ENCODE measurements at regions of chr17 and their contacts with region 1.

Region 1: GRCh38 chr17:47889734-47890529 is 6.1 kb upstream of the SP2 start:
- DNase-seq: peak; percentile 81
- CTCF ChIP-seq: peak; percentile 95

Region 2: GRCh38 chr17:47663912-47664625 is 225.9 kb before region 1 on chr17:
- CTCF ChIA-PET with region 1: no interaction called
- POLR2A ChIA-PET with region 1: no interaction called
- DNase-seq: peak; percentile 61
- CTCF ChIP-seq: peak; percentile 80

Region 3: DNA sequence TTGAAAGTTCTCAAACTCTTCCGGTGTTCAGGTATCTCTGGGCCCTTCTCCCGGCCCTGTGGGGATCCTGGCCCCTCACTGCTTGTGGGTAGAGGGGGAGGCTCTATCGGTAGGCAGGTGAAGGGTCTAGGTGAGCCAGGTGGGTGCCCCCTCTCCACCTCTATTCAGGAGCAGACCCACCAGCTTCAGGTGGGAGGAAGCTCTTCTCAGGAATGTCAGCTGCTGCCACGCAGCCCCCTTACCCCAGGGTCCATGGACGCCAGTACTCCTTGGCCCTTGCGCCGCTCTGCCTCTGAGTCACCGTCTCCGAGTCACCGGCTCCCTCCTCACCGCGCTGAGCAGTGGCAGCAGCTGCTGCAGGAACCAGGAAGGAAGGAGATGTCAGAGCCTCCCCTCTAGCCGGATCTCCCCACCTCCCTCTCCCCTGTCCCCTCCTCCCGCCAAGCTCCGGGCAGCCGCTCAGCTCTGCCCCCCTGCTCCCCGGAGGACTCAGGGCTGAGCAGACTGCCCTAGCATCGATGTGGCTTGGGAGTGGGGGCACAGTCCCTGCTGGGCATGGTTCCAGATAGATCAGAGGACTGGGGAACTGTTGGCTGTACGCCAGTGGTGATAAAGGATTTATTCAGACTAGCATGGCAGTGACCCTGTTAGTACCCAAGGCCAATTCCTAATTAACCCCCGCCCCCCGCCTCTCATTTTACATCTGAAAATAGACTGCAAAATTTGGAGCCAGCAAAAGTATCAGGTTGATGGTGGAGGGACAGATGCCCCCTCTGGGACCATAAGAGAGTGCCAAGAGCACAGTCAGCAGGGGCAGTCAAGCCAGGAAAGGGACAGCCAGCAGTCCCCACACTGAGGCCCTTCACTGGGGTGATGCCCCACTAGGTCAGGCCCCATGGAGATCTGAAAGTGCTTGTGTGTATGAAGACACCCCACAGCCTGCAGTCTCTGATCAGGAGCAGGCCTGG is 68.2 kb before region 1 on chr17 and contains the start of gene OSBPL7:
- CTCF ChIA-PET with region 1: interaction called, 12 read pairs
- POLR2A ChIA-PET with region 1: no interaction called
- DNase-seq: peak; percentile 91
- CTCF ChIP-seq: peak; percentile 77

Region 4: DNA sequence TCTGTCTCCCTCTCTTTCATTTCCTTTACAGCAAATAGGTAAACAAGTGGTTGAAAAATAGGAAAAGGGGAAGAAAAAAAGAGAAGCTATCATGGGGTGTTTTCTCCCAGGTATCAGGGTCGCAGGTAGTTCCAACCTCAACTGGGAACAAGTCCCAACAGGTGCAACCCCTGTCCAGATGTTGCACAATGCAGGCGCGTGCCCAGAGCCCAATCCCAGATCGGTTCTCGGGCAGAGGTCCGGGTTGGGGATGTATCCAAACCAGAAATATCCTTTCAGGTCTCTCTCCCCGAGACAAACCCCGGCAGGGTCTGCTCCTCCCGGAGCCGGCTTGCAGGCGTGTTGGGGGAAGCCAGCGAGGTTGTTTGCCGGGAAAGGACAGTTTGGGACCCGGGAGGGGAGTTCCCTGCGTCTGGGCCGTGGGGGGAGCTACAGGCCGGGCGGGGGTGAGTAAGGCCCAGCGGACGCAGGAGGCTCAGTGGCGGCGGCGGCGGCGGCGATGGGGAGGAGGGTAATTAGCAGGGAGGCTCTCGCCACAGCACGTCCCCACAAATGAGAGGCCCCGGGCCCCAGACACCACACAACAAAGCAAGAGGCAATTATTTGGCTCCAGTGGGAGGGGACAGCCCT is 17.8 kb before region 1 on chr17:
- CTCF ChIA-PET with region 1: interaction called, 17 read pairs
- POLR2A ChIA-PET with region 1: no interaction called
- DNase-seq: no peak
- CTCF ChIP-seq: no peak

Region 5: DNA sequence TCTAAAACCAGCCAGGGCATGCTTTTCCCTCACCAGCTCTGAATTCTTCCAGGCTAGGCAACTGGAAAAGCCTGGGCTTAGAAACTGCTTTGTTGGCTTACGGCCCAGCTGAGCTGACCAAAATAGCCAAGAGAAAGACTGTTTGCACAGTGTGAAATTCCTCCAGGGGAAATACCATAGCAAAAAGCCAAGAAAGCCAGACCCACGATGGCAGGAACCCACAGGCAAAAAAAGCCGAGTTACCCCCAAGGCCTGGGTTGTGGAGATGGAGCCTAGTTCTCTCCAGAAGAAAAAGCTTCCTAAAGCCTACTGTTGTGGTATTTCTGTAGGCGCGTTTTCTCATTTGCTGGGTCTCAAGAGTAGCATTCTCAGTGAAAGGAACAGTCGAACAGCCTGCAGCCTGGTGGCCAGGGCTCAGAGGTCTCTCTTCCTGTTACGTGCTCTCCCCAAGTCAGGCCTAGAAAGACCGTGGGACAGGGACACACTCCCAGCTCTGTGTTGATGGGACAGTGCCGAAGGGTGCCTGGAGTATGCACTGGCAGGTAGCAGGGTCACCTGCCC is 15.4 kb after region 1 on chr17:
- CTCF ChIA-PET with region 1: interaction called, 10 read pairs
- POLR2A ChIA-PET with region 1: no interaction called
- DNase-seq: no peak
- CTCF ChIP-seq: no peak

Region 6: GRCh38 chr17:47929218-47930000 is 39.5 kb after region 1 on chr17:
- CTCF ChIA-PET with region 1: interaction called, 11 read pairs
- POLR2A ChIA-PET with region 1: no interaction called
- DNase-seq: no peak
- CTCF ChIP-seq: no peak

Region 7: GRCh38 chr17:47949136-47949759 is 59.3 kb after region 1 on chr17:
- CTCF ChIA-PET with region 1: interaction called, 15 read pairs
- POLR2A ChIA-PET with region 1: no interaction called
- DNase-seq: peak; percentile 82
- CTCF ChIP-seq: peak; percentile 88

Region 8: GRCh38 chr17:47970704-47971463 is 81.0 kb after region 1 on chr17 and contains the start of gene CDK5RAP3:
- CTCF ChIA-PET with region 1: interaction called, 10 read pairs
- POLR2A ChIA-PET with region 1: no interaction called
- DNase-seq: peak; percentile 99
- CTCF ChIP-seq: peak; percentile 86